ENCODE measurements at regions of chr19 and their contacts with region 1.

Region 1: DNA sequence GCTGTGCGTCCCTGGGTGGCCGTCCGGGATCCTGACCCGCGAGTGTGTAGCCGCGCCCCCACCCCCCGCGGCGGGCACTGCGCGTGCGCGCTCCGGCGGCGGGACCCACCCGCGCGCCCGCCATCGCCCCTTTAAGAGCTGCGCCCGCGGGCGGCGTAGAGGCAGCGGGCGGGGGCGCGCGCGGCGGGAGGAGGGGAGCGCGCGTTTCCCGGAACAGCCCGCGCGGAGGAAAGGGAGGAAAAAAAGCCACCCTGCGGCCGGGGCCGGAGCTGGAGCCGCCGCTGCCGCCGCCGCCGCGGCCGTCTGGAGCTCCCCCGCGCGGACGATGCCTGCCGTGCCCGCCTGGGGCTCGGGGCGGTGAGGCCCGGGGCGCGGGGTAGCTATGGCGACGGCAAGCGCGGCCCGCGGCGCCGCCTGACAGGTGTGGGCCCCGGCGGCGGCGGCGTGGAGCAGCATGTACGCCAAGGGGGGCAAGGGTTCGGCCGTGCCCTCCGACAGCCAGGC is at the start of gene SSBP4:
- DNase-seq: no peak
- H3K4me3 ChIP-seq: peak within 1 kb of the TSS; percentile 73
- CTCF ChIP-seq: peak; percentile 24

Region 2: DNA sequence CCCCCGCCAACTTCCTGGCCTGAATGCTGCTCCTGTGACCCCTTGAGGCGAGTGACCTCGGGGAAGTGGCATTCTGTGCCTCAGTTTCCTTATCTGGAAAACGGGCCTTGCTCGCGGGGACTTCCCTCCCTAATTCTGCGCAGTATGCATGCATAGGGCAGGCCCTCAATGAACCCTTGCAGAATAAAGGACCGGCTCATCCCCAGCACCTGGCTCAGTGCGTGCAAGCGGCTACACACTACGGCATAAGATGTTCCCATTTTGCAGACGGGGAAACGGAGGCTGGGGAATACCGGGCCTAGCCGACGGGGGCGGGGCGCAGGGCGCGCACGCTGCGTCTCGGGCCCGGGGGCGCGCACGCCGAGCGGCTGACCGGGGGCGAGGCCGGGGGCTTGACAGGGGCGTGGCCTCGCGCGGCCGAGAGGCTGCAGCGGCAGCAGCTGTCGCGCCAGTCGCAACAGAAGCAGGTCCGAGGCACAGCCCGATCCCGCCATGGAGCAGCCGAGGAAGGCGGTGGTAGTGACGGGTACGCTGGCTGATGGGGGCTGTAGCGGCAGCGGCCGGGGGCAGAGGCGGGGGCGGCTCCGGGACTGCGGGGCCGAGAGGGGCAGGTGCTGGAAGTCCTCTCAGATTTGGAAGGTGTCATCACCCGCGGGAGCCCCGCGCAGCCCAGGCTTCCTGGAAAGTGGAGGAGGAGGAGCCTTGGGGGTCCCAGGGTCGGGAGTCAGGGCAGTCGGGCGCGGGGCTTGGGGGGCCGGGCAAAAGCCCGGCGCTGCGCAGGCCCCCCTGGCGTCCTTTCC is 78.9 kb before region 1 on chr19 and contains the start of gene PGPEP1:
- CTCF ChIA-PET with region 1: interaction called, 298 read pairs
- POLR2A ChIA-PET with region 1: no interaction called
- DNase-seq: no peak
- H3K4me3 ChIP-seq: peak within 1 kb of the TSS; percentile 80
- CTCF ChIP-seq: no peak

Region 3: GRCh38 chr19:18349524-18350128 is 69.6 kb before region 1 on chr19:
- CTCF ChIA-PET with region 1: interaction called, 298 read pairs
- POLR2A ChIA-PET with region 1: no interaction called
- DNase-seq: no peak
- H3K4me3 ChIP-seq: no peak overlapping the region
- CTCF ChIP-seq: peak; percentile 84

Region 4: GRCh38 chr19:18401580-18402112 is 17.6 kb before region 1 on chr19:
- CTCF ChIA-PET with region 1: interaction called, 54 read pairs
- POLR2A ChIA-PET with region 1: interaction called, 4 read pairs
- DNase-seq: no peak
- H3K4me3 ChIP-seq: no peak overlapping the region
- CTCF ChIP-seq: peak; percentile 54

Region 5: GRCh38 chr19:18408053-18408476 is 11.2 kb before region 1 on chr19:
- CTCF ChIA-PET with region 1: interaction called, 54 read pairs
- POLR2A ChIA-PET with region 1: interaction called, 4 read pairs
- DNase-seq: no peak
- H3K4me3 ChIP-seq: no peak overlapping the region
- CTCF ChIP-seq: peak; percentile 52

Region 6: GRCh38 chr19:18450931-18451845 is 31.9 kb after region 1 on chr19:
- CTCF ChIA-PET with region 1: interaction called, 14 read pairs
- POLR2A ChIA-PET with region 1: no interaction called
- DNase-seq: no peak
- H3K4me3 ChIP-seq: no peak overlapping the region
- CTCF ChIP-seq: peak; percentile 99

Region 7: GRCh38 chr19:18557474-18558201 is 138.4 kb after region 1 on chr19 and contains the start of gene KXD1:
- CTCF ChIA-PET with region 1: no interaction called
- POLR2A ChIA-PET with region 1: no interaction called
- DNase-seq: peak; percentile 92
- H3K4me3 ChIP-seq: peak within 1 kb of the TSS; percentile 91
- CTCF ChIP-seq: no peak

Measured in AG04449 (cell line).